A673 (cell line): ENCODE measurements at regions of chr10 and their contacts with region 1.

Region 1: DNA sequence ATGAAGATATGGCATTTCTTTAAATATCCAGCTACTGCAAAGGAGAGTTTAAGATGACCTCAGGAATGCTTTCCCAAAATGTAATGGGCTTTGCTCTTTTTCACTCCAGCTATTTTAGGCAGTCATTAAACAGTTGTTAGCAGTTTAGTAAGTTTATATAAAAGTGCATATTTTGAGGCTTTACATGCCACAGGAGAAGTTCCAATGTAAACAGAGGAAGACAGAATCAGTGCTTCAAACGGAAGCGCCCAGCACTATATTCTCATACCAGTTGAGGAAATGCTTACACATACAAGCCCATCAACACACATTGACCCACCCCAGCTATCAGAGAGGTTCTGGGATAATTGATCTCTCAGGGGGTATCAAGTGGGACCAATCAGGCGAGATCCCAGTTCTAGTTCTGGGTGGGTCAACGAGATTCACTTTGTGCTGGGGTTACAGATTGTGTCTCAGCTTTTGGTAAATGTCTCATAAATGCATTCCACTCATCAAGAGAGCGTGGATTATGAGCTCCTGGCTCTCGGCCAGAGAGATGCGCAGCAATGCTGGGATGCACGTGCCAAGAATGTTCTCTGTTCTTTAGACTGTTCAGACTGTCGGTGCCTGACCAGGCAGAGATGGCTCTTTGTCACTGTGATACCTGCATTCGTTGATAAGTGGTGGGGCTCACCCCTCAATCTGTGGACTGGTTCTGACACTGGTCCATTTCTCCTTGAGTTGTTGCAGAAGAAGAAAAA is 55.0 kb downstream of the CACNB2 start:
- DNase-seq: peak; percentile 77
- H3K4me3 ChIP-seq: no peak overlapping the region
- H3K27ac ChIP-seq: no peak overlapping the region
- H3K4me1 ChIP-seq: peaks cover 49% of the 10 kb centered on the region
- H3K27me3 ChIP-seq: no peaks in the 10 kb centered on the region
- CTCF ChIP-seq: no peak

Region 2: DNA sequence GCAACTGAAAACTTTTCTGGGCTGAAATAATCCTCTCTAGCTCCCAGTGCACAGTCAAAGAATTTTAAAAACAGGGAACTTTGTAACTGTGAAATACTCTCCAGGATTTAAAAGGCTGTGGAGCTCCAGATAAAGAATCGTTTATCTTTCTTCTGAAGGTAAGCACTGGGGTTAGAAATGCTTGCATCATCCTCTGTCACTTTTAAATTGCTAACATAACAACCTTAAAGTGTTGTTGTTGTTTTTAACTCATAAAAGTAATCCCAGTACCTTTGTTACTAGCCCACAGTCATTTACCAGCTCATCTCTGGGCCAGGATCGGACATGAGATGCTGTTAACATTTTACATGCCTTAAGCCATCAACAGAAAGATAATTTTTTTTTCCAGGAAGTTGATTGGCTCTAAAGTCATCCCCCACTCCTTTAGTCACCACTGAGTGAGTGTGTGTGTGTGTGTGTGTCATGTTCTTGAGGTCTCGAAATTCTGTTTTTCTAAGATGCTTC is 243.3 kb before region 1 on chr10 and contains the start of gene SLC39A12:
- CTCF ChIA-PET with region 1: no interaction called
- POLR2A ChIA-PET with region 1: no interaction called
- intact Hi-C with region 1: no loop called
- DNase-seq: no peak
- H3K4me3 ChIP-seq: no peak within 1 kb of the TSS
- H3K27ac ChIP-seq: no peak within 1 kb of the TSS
- H3K4me1 ChIP-seq: peaks cover 4% of the 10 kb centered on the region
- H3K27me3 ChIP-seq: no peaks in the 10 kb centered on the region
- CTCF ChIP-seq: no peak
- total RNA-seq, gene SLC39A12: not detected in 2 replicates

Region 3: DNA sequence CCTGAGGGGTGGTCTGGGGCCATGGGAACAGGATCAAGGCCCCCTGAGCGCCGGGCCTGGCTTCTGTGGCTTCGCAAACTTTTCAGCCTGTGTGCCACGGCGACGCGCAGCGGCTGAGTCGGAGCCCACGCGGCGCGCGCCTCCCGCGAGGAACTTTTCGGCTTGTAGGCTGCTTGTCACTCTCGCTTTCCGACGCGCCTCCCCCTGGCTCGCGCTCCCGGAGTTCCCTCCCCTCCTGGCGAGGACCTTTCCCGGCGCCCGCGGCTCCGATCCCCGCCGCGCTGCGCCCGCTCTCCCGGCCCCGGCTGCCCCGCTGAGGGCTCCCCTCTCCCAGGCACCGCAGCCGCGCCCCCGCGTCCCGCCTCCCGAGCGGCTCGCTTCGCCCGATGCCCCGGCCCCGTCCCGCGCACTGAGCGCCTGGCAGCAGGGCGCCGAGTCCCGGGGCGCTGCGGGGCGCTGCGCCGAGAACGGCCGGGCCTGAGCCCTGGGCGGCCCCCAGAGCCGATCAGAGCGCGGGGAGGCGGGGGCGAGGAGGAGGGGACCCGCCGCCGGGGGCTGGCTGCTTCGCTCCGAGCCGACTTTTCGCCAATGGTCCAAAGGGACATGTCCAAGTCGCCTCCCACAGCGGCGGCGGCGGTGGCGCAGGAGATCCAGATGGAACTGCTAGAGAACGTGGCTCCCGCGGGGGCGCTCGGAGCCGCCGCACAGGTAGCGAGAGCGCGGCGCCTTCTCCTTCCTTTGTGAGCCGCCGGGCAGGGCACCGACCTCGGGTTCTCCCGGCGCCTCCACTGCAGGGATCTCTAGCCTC is 54.9 kb before region 1 on chr10 and contains the start of gene CACNB2:
- CTCF ChIA-PET with region 1: no interaction called
- POLR2A ChIA-PET with region 1: no interaction called
- intact Hi-C with region 1: loop called (anchors 5 kb)
- DNase-seq: peak; percentile 85
- H3K4me3 ChIP-seq: peak within 1 kb of the TSS; percentile 83
- H3K27ac ChIP-seq: peak within 1 kb of the TSS; percentile 88
- H3K4me1 ChIP-seq: peaks cover 36% of the 10 kb centered on the region
- H3K27me3 ChIP-seq: no peaks in the 10 kb centered on the region
- CTCF ChIP-seq: 0 out of 2 replicates have a peak, but pooled peaks have one; percentile 11
- total RNA-seq, gene CACNB2: 30.0 and 34.1 TPM in 2 replicates